ENCODE measurements at regions of chr17 and their contacts with region 1.

Region 1: DNA sequence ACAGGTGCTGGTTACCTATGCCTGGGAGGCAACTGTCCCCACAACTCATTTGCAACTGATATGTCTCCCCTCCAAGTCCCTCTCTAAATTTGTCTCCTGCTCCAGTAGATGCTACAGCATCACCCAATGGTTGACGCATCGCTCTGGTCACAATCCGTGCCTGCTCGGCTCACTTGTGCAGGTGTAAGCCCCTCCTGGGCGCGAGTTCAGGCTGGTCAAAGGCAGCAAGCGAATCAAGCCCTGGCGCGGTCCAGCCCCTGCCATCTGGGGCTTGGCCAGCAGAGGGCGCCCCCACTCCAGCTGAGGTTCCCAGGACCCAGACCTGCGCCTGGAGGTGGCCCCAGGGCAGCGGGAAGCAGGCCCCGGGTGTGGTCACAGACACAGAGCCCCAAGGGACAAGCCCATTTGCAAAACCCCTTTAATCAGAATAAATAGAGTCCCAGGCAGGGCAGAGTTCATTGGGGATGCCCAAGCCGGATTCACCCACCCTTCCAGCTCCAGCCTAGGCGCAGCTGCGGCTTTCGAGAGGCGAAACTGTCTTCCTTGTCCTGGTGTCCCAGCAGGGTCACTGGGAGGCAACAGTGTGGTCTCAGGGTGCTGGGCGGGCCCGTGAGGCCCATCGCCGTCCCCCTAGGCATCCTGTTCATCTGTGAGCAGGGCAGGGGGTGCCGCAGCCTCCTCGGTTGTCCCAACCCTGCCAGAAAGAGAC is 15.9 kb downstream of the TMC6 start:
- DNase-seq: peak; percentile 83
- H3K4me3 ChIP-seq: no peak overlapping the region
- H3K27ac ChIP-seq: no peak overlapping the region
- H3K4me1 ChIP-seq: peaks cover 0 to 14% (median 5%) of the 10 kb centered on the region in 4 donors
- H3K27me3 ChIP-seq: peaks cover 0 to 20% (median 6%) of the 10 kb centered on the region in 3 donors
- CTCF ChIP-seq: peak; percentile 94 to 99 (median 98)
- EP300 ChIP-seq: no peak
- POLR2A ChIP-seq: no peak

Region 2: GRCh38 chr17:78176548-78177025 is 63.9 kb after region 1 on chr17:
- intact Hi-C with region 1: loop called (anchors 2 kb)
- DNase-seq: peak; percentile 84
- H3K4me3 ChIP-seq: no peak overlapping the region
- H3K27ac ChIP-seq: peak overlapping the region in 1 of 4 donors; percentile 92
- H3K4me1 ChIP-seq: peaks cover 0 to 72% (median 51%) of the 10 kb centered on the region in 4 donors
- H3K27me3 ChIP-seq: no peaks in the 10 kb centered on the region
- CTCF ChIP-seq: peak; percentile 43 to 83 (median 78)
- EP300 ChIP-seq: no peak
- POLR2A ChIP-seq: no peak